ENCODE measurements at regions of chr11 and their contacts with region 1.

Region 1: GRCh38 chr11:16820324-16821092 is 82.1 kb downstream of the C11orf58 start:
- DNase-seq: peak; percentile 71
- H3K4me3 Mint-ChIP-seq: peak overlapping the region; percentile 26
- H3K27ac Mint-ChIP-seq: peak overlapping the region; percentile 37
- H3K4me1 Mint-ChIP-seq: peaks cover 62% of the 10 kb centered on the region
- H3K27me3 Mint-ChIP-seq: no peaks in the 10 kb centered on the region
- CTCF ChIP-seq: peak; percentile 82

Region 2: GRCh38 chr11:16785520-16786128 is 34.9 kb before region 1 on chr11:
- CTCF ChIA-PET with region 1: interaction called, 5 read pairs
- intact Hi-C with region 1: loop called (anchors 2 kb)
- DNase-seq: peak; percentile 72
- H3K4me3 Mint-ChIP-seq: no peak overlapping the region
- H3K27ac Mint-ChIP-seq: peak overlapping the region; percentile 42
- H3K4me1 Mint-ChIP-seq: peaks cover 84% of the 10 kb centered on the region
- H3K27me3 Mint-ChIP-seq: no peaks in the 10 kb centered on the region
- CTCF ChIP-seq: peak; percentile 86